PC-3 (cell line): ENCODE measurements at regions of chr2 and their contacts with region 1.

Region 1: DNA sequence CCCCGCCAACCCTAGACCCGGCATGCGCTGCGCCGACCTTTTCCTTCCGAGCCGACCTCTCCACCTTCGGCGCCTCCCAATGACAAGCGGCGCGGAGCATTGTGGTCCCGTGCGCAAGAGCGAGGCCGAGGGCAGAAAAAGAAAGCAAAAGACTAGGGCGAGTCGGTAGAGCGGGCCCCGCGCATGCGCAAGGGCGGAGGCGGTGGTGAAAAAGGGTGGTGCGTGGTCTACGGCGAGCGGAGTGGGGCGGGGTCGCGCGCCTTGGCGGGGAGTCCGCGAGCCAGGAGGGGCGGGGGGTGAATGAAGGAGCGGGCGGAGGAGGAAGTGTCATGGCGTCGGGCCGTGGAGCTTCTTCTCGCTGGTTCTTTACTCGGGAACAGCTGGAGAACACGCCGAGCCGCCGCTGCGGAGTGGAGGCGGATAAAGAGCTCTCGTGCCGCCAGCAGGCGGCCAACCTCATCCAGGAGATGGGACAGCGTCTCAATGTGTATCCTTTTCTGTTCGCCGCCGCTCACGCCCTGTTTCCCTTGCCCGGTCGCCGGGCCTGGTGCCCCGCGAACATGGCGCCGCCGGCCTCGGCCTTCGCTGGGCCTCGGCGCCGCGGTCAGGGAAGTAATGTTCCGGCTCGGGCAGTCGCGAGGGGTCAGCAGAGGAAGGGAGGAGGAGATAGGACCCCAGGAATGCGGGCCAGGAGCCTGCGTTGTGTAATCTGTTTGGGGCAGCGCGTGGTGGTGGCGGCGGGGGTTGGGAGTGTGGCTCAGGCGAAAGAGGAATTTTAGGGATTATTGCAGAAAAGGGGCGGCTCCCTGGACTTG is at the start of gene CCNT2:
- DNase-seq: peak; percentile 99
- ATAC-seq: peak; percentile 92
- H3K4me3 ChIP-seq: peak within 1 kb of the TSS; percentile 96
- H3K27ac ChIP-seq: peak within 1 kb of the TSS; percentile 93
- H3K4me1 ChIP-seq: peaks cover 19% of the 10 kb centered on the region; the same call in 1 of the 2 replicates
- H3K27me3 ChIP-seq: no peaks in the 10 kb centered on the region
- CTCF ChIP-seq: no peak
- total RNA-seq, gene CCNT2: 16.2 and 18.9 TPM in 2 replicates

Region 2: GRCh38 chr2:134954065-134954464 is 35.3 kb after region 1 on chr2:
- CTCF ChIA-PET with region 1: no interaction called
- POLR2A ChIA-PET with region 1: no interaction called
- intact Hi-C with region 1: loop called (anchors 1 kb)
- DNase-seq: no peak
- ATAC-seq: no peak
- H3K4me3 ChIP-seq: no peak overlapping the region
- H3K27ac ChIP-seq: no peak overlapping the region
- H3K4me1 ChIP-seq: peaks cover 10% of the 10 kb centered on the region
- H3K27me3 ChIP-seq: no peaks in the 10 kb centered on the region
- CTCF ChIP-seq: no peak